SK-N-SH (cell line): ENCODE measurements at regions of chr13 and their contacts with region 1.

Region 1: DNA sequence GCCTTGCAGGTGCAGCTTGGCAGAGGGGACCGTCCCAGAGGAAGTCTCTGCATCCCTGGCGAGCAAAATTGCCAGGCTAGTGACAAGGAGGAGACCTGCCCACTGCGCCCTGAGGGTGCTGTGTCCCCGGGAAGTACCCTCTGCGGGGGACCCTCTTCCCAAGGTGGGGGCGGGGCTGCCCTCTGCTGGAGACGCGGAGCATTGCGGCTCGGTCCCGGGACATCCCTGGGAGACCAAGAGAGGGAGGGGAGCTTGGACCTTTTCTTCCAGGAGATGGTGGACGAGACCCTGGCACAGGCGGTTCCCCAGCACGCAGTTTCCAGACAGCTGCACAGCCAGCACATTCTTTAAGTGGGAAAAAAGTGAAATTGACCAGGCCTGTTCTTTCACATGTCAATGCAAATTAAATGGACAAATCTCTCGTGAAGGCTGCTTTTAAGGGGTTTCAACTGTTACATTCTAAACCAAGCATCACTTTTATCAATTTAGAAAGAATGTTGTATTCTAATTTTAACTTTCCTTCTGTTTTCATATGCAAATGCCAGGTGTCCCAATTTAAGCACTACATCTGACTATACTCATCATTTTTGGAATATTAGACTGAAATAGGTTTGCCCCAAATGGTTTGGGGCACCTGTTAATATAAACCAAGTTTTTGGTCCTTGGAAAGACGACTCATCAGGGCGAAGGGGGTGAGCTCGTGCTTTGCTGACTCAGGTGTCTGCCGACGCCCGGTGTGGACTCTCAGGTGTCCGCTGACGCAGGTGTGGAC is 60.7 kb downstream of the MCF2L start:
- DNase-seq: peak; percentile 92
- H3K4me3 ChIP-seq: no peak overlapping the region; a peak in 1 of 4 replicates
- H3K27ac ChIP-seq: no peak overlapping the region
- H3K4me1 ChIP-seq: peaks cover 0 to 20% of the 10 kb centered on the region in 2 experiments; a peak in 1 of 4 replicates
- H3K27me3 ChIP-seq: peaks cover 4% of the 10 kb centered on the region; the same call in 1 of the 2 replicates
- CTCF ChIP-seq: peak; percentile 75
- EP300 ChIP-seq: no peak
- RAD21 ChIP-seq: peak; percentile 77

Region 2: GRCh38 chr13:112619730-112620631 is 409.7 kb before region 1 on chr13:
- CTCF ChIA-PET with region 1: no interaction called
- POLR2A ChIA-PET with region 1: no interaction called
- DNase-seq: no peak
- H3K4me3 ChIP-seq: no peak overlapping the region
- H3K27ac ChIP-seq: no peak overlapping the region
- H3K4me1 ChIP-seq: no peaks in the 10 kb centered on the region
- H3K27me3 ChIP-seq: peaks cover 5% of the 10 kb centered on the region; the same call in 1 of the 2 replicates
- CTCF ChIP-seq: no peak
- EP300 ChIP-seq: no peak
- RAD21 ChIP-seq: no peak

Region 3: GRCh38 chr13:112942689-112943308 is 86.9 kb before region 1 on chr13:
- CTCF ChIA-PET with region 1: interaction called, 150 read pairs
- POLR2A ChIA-PET with region 1: interaction called, 4 read pairs
- DNase-seq: peak; percentile 93
- H3K4me3 ChIP-seq: peak overlapping the region; percentile 57 to 67
- H3K27ac ChIP-seq: no peak overlapping the region; a peak in 1 of 4 replicates
- H3K4me1 ChIP-seq: peaks cover 0 to 27% of the 10 kb centered on the region in 2 experiments; a peak in 2 of 4 replicates
- H3K27me3 ChIP-seq: no peaks in the 10 kb centered on the region; the same call in 1 of the 2 replicates
- CTCF ChIP-seq: peak; percentile 95
- EP300 ChIP-seq: peak in 1 of 2 experiments; percentile 48; a peak in 1 of 4 replicates
- RAD21 ChIP-seq: peak; percentile 99

Region 4: DNA sequence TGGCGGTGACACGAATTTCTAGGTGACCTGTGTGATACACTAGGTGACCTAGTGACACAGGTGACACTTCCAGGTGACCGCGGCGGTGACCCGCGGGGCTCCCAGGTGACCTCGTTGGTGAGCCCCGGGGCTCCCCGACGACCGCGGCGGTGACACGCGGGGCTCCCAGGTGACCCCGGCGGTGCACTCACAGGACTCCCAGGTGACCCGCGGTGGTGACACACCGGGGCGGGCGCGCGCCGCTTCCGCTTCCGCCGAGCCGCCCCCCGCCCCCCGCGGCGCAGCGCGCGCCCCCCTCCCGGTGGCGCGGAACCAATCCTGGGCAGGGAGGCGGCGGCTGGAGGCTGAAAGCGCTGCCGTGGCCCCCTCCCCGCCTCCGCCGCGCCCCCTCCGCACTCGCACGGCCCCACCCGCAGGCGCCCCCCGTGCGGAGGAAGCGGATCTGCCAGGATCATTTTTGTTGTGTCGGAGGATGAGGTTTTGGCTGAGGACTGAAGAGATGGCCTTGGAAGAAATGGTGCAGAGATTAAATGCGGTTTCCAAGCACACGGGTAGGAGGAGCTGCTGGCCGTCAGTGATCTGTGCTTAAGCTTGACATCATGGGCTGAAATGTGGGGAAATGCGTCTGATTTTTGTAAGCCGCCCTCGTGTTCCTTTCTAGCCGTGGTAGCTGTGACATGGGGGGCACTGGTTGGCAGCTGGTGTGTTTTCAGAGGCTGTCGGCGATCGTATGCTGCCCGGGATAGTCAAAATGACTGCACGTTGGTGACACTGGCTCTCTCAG is 60.6 kb before region 1 on chr13 and contains the start of gene MCF2L:
- CTCF ChIA-PET with region 1: interaction called, 52 read pairs
- POLR2A ChIA-PET with region 1: no interaction called
- DNase-seq: peak; percentile 93
- H3K4me3 ChIP-seq: peak within 1 kb of the TSS; percentile 38 to 55
- H3K27ac ChIP-seq: peak within 1 kb of the TSS in 1 of 2 experiments; percentile 79; a peak in 2 of 4 replicates
- H3K4me1 ChIP-seq: peaks cover 0 to 19% of the 10 kb centered on the region in 2 experiments; a peak in 2 of 4 replicates
- H3K27me3 ChIP-seq: peaks cover 33% of the 10 kb centered on the region
- CTCF ChIP-seq: peak; percentile 25; the same call in 1 of the 2 replicates
- EP300 ChIP-seq: no peak
- RAD21 ChIP-seq: peak; percentile 52
- polyA plus RNA-seq, gene MCF2L: 0.56 and 1.1 TPM in 2 replicates

Region 5: DNA sequence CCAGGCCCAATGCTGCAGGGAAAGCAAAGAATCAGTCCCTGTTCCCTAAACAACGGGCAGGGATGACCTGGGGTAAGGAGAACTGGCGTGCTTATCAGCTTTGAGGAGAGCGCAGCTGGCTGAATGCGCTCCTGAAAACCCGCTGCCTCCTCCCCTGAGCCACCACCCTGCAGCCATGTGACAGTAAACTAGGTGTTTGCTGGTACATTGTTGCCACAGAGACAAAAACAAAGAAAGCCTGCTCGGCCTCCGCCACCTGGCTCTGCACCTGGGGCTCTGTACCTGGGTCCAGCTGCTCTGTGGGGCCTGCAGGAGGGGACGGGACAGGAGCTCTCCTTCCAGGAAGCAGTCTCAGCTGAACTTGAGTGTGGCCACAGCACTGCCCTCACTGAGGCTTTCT is 38.9 kb before region 1 on chr13:
- CTCF ChIA-PET with region 1: interaction called, 12 read pairs
- POLR2A ChIA-PET with region 1: no interaction called
- DNase-seq: peak; percentile 61
- H3K4me3 ChIP-seq: no peak overlapping the region
- H3K27ac ChIP-seq: peak overlapping the region in 1 of 2 experiments; percentile 39; a peak in 2 of 4 replicates
- H3K4me1 ChIP-seq: peaks cover 0 to 21% of the 10 kb centered on the region in 2 experiments; a peak in 1 of 4 replicates
- H3K27me3 ChIP-seq: no peaks in the 10 kb centered on the region; the same call in 1 of the 2 replicates
- CTCF ChIP-seq: no peak
- EP300 ChIP-seq: no peak
- RAD21 ChIP-seq: no peak

Region 6: GRCh38 chr13:113009743-113010509 is 19.7 kb before region 1 on chr13:
- CTCF ChIA-PET with region 1: interaction called, 14 read pairs
- POLR2A ChIA-PET with region 1: no interaction called
- DNase-seq: peak; percentile 94
- H3K4me3 ChIP-seq: no peak overlapping the region
- H3K27ac ChIP-seq: peak overlapping the region in 1 of 2 experiments; percentile 85; a peak in 2 of 4 replicates
- H3K4me1 ChIP-seq: peaks cover 0 to 30% of the 10 kb centered on the region in 2 experiments; a peak in 2 of 4 replicates
- H3K27me3 ChIP-seq: no peaks in the 10 kb centered on the region
- CTCF ChIP-seq: no peak
- EP300 ChIP-seq: peak in 1 of 2 experiments; percentile 30; a peak in 1 of 4 replicates
- RAD21 ChIP-seq: no peak